Mammary epithelial cell (primary cell): ENCODE measurements at regions of chr4 and their contacts with region 1.

Region 1: GRCh38 chr4:73019462-73020047 is 50.0 kb downstream of the COX18 start:
- DNase-seq: peak; percentile 19
- H3K4me3 ChIP-seq: no peak overlapping the region
- H3K27ac ChIP-seq: no peak overlapping the region
- H3K4me1 ChIP-seq: no peaks in the 10 kb centered on the region
- H3K27me3 ChIP-seq: peaks cover 2% of the 10 kb centered on the region
- CTCF ChIP-seq: peak; percentile 62 to 64

Region 2: DNA sequence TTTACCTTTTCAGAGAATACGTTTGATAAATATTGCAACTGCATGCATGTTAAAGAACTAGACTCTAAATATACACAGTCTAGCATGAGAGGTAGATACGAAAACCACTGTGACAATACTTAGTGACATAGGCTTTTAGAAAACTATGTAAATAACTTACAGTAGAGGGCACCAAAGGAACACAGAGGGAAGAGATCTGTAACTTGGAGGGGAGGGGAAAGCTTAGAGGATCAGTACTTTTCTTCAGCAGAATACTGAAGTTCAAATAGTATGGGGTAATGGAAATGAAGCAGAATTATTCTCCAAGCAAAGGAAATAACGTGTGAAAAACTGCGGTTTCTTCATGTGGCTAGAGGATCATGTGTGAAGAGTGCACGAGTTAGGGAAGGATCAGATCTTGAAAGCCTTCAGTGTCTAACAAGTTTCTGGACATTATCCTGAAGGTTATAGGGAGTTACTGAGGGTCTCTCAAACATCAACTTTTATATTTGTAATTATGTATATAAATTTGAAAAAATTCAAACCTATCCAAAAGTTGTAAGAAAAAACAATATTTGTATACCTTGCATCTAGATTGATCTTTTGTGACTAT is 723.5 kb before region 1 on chr4:
- CTCF ChIA-PET with region 1: no interaction called
- dilution Hi-C with region 1: no loop called
- in situ Hi-C with region 1: loop called in 1 of 2 experiments (anchors 25 kb)
- intact Hi-C with region 1: loop called (anchors 5 kb)
- DNase-seq: peak; percentile 34
- H3K4me3 ChIP-seq: no peak overlapping the region
- H3K27ac ChIP-seq: no peak overlapping the region
- H3K4me1 ChIP-seq: no peaks in the 10 kb centered on the region
- H3K27me3 ChIP-seq: no peaks in the 10 kb centered on the region
- CTCF ChIP-seq: peak; percentile 54 to 79

Region 3: GRCh38 chr4:72505314-72505744 is 514.2 kb before region 1 on chr4:
- CTCF ChIA-PET with region 1: no interaction called
- dilution Hi-C with region 1: no loop called
- in situ Hi-C with region 1: loop called (anchors 10 kb)
- intact Hi-C with region 1: loop called (anchors 1 kb)
- DNase-seq: peak; percentile 25
- H3K4me3 ChIP-seq: no peak overlapping the region
- H3K27ac ChIP-seq: no peak overlapping the region
- H3K4me1 ChIP-seq: no peaks in the 10 kb centered on the region
- H3K27me3 ChIP-seq: peaks cover 2% of the 10 kb centered on the region
- CTCF ChIP-seq: peak; percentile 55 to 86

Region 4: DNA sequence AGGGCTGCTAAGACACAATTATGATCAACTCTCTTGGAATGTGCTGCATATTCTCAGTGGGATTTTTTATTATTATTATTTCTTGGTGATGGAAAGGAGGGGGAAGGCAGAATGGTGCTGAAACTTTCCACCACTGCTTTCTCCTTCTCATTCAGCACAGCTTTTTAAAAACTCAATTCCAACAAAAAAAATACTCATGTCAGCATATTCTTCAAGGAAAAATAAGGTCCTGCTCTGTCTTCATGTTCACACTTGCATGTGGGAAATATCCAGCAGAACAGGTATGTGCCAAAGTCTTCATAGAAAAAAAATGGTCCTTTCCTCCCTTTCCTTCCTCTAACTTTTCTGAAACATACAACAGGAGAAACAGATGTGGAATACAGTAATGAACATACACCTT is 306.6 kb before region 1 on chr4:
- CTCF ChIA-PET with region 1: no interaction called
- dilution Hi-C with region 1: no loop called
- in situ Hi-C with region 1: loop called (anchors 10 kb)
- intact Hi-C with region 1: no loop called
- DNase-seq: no peak
- H3K4me3 ChIP-seq: no peak overlapping the region
- H3K27ac ChIP-seq: no peak overlapping the region
- H3K4me1 ChIP-seq: no peaks in the 10 kb centered on the region
- H3K27me3 ChIP-seq: peaks cover 3% of the 10 kb centered on the region
- CTCF ChIP-seq: no peak

Region 5: GRCh38 chr4:72919937-72920336 is 99.6 kb before region 1 on chr4:
- CTCF ChIA-PET with region 1: no interaction called
- dilution Hi-C with region 1: no loop called
- in situ Hi-C with region 1: no loop called
- intact Hi-C with region 1: loop called (anchors 10 kb)
- DNase-seq: no peak
- H3K4me3 ChIP-seq: no peak overlapping the region
- H3K27ac ChIP-seq: no peak overlapping the region
- H3K4me1 ChIP-seq: no peaks in the 10 kb centered on the region
- H3K27me3 ChIP-seq: no peaks in the 10 kb centered on the region
- CTCF ChIP-seq: no peak

Region 6: DNA sequence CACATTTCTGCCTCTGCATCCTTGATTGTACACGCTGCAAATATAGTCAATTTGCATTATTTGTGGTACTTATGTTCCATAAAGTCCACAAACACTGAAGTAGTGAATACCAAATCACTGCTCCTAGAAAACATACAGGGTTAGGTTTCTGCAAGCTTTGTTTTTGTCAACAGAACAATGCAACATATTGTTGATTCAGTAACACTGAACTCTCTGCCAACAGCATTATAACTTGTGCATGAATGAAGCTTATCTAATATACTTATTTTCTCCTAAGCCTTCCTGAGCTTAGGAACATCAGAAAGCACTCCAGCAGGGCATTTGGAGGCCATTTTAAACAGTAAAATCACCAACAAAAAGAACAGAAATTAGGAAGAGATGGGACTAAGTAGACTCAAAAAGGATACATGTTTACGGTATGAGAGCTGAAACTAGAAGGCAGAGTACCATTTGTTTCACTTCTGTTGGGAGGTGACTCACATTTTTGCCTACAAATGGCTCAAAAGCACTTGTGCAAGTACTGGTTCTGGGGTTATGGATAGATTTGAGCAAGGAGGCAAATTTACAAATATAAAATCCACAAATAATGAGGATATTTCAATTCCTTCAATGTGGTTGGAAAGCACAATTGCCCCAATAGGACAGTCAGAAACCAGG is 35.8 kb after region 1 on chr4:
- CTCF ChIA-PET with region 1: no interaction called
- dilution Hi-C with region 1: no loop called
- in situ Hi-C with region 1: no loop called
- intact Hi-C with region 1: no loop called
- DNase-seq: no peak
- H3K4me3 ChIP-seq: no peak overlapping the region
- H3K27ac ChIP-seq: no peak overlapping the region
- H3K4me1 ChIP-seq: no peaks in the 10 kb centered on the region
- H3K27me3 ChIP-seq: no peaks in the 10 kb centered on the region
- CTCF ChIP-seq: no peak